H1 (cell line): ENCODE measurements at regions of chr10 and their contacts with region 1.

Region 1: GRCh38 chr10:72331601-72332422 is 22.9 kb downstream of the DNAJB12 start:
- DNase-seq: peak; percentile 76 to 88
- H3K4me3 ChIP-seq: peak overlapping the region in 1 of 4 experiments; percentile 39; a peak in 2 of 8 replicates
- H3K27ac ChIP-seq: no peak overlapping the region; the same call in 1 of the 2 replicates
- H3K4me1 ChIP-seq: peaks cover 0 to 36% (median 23%) of the 10 kb centered on the region in 4 experiments; a peak in 6 of 7 replicates
- H3K27me3 ChIP-seq: no peaks in the 10 kb centered on the region
- CTCF ChIP-seq: peak in 2 of 3 experiments; percentile 18 to 57; a peak in 3 of 4 replicates
- EP300 ChIP-seq: no peak
- POLR2A ChIP-seq: no peak; a peak in 1 of 3 replicates
- RAD21 ChIP-seq: peak in 1 of 2 experiments; percentile 25; a peak in 2 of 4 replicates

Region 2: GRCh38 chr10:72061491-72061890 is 270.3 kb before region 1 on chr10:
- CTCF ChIA-PET with region 1: interaction called, 10 read pairs
- POLR2A ChIA-PET with region 1: no interaction called
- DNase-seq: peak in 1 of 2 experiments; percentile 71
- H3K4me3 ChIP-seq: no peak overlapping the region
- H3K27ac ChIP-seq: no peak overlapping the region
- H3K4me1 ChIP-seq: peaks cover 0 to 9% (median 7%) of the 10 kb centered on the region in 4 experiments; a peak in 4 of 7 replicates
- H3K27me3 ChIP-seq: no peaks in the 10 kb centered on the region
- CTCF ChIP-seq: peak; percentile 70 to 76 (median 71)
- EP300 ChIP-seq: no peak
- POLR2A ChIP-seq: no peak
- RAD21 ChIP-seq: peak; percentile 64 to 74

Region 3: GRCh38 chr10:72126184-72126871 is 205.5 kb before region 1 on chr10:
- CTCF ChIA-PET with region 1: interaction called, 20 read pairs
- POLR2A ChIA-PET with region 1: no interaction called
- DNase-seq: no peak
- H3K4me3 ChIP-seq: no peak overlapping the region; a peak in 1 of 8 replicates
- H3K27ac ChIP-seq: no peak overlapping the region; the same call in 1 of the 2 replicates
- H3K4me1 ChIP-seq: peaks cover 0 to 5% (median 2%) of the 10 kb centered on the region in 4 experiments; a peak in 2 of 7 replicates
- H3K27me3 ChIP-seq: no peaks in the 10 kb centered on the region
- CTCF ChIP-seq: peak in 2 of 3 experiments; percentile 45 to 47; a peak in 2 of 4 replicates
- EP300 ChIP-seq: no peak
- POLR2A ChIP-seq: no peak
- RAD21 ChIP-seq: peak; percentile 59 to 66

Region 4: DNA sequence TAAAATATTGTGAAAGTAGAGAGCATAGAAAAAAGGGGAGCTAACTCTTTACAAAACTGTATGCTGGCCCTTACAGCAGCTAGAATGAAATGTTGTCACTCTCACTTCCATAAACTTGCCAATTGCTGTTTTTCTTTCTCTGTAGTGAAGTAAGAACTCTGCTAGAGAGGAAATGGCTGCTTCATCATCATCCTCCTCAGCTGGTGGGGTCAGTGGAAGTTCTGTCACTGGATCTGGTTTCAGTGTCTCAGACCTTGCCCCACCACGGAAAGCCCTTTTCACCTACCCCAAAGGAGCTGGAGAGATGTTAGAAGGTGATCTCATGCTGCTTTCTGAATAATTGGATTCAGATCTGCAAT is 108.1 kb before region 1 on chr10:
- CTCF ChIA-PET with region 1: interaction called, 11 read pairs
- POLR2A ChIA-PET with region 1: interaction called, 3 read pairs
- DNase-seq: no peak
- H3K4me3 ChIP-seq: no peak overlapping the region
- H3K27ac ChIP-seq: no peak overlapping the region
- H3K4me1 ChIP-seq: peaks cover 0 to 2% (median under 1%) of the 10 kb centered on the region in 4 experiments; a peak in 2 of 7 replicates
- H3K27me3 ChIP-seq: no peaks in the 10 kb centered on the region
- CTCF ChIP-seq: no peak
- EP300 ChIP-seq: no peak
- POLR2A ChIP-seq: no peak
- RAD21 ChIP-seq: no peak

Region 5: GRCh38 chr10:72260588-72261322 is 71.1 kb before region 1 on chr10:
- CTCF ChIA-PET with region 1: interaction called, 25 read pairs
- POLR2A ChIA-PET with region 1: interaction called, 16 read pairs
- DNase-seq: peak; percentile 93 to 96
- H3K4me3 ChIP-seq: peak overlapping the region; percentile 31 to 56 (median 46); a peak in 7 of 8 replicates
- H3K27ac ChIP-seq: peak overlapping the region; percentile 87
- H3K4me1 ChIP-seq: peaks cover 17 to 34% (median 24%) of the 10 kb centered on the region in 4 experiments
- H3K27me3 ChIP-seq: no peaks in the 10 kb centered on the region
- CTCF ChIP-seq: peak; percentile 19 to 47 (median 21); a peak in 3 of 4 replicates
- EP300 ChIP-seq: peak; percentile 14 to 68; a peak in 2 of 3 replicates
- POLR2A ChIP-seq: peak in 1 of 2 experiments; percentile 68; a peak in 1 of 3 replicates
- RAD21 ChIP-seq: peak; percentile 23 to 54; a peak in 2 of 4 replicates

Region 6: GRCh38 chr10:72297968-72298773 is 33.6 kb before region 1 on chr10:
- CTCF ChIA-PET with region 1: interaction called, 22 read pairs
- POLR2A ChIA-PET with region 1: interaction called, 4 read pairs
- DNase-seq: peak; percentile 77 to 96
- H3K4me3 ChIP-seq: peak overlapping the region; percentile 43 to 70 (median 56)
- H3K27ac ChIP-seq: peak overlapping the region; percentile 51
- H3K4me1 ChIP-seq: peaks cover 5 to 21% (median 12%) of the 10 kb centered on the region in 4 experiments
- H3K27me3 ChIP-seq: no peaks in the 10 kb centered on the region; a peak in 1 of 7 replicates
- CTCF ChIP-seq: peak in 1 of 3 experiments; percentile 5; a peak in 1 of 4 replicates
- EP300 ChIP-seq: no peak
- POLR2A ChIP-seq: peak in 1 of 2 experiments; percentile 13; a peak in 1 of 3 replicates
- RAD21 ChIP-seq: no peak

Region 7: GRCh38 chr10:72319416-72320254 is 12.2 kb before region 1 on chr10:
- CTCF ChIA-PET with region 1: interaction called, 7 read pairs
- POLR2A ChIA-PET with region 1: interaction called, 38 read pairs
- DNase-seq: peak in 1 of 2 experiments; percentile 83
- H3K4me3 ChIP-seq: peak overlapping the region; percentile 14 to 55 (median 22); a peak in 5 of 8 replicates
- H3K27ac ChIP-seq: no peak overlapping the region
- H3K4me1 ChIP-seq: peaks cover 17 to 39% (median 26%) of the 10 kb centered on the region in 4 experiments
- H3K27me3 ChIP-seq: no peaks in the 10 kb centered on the region
- CTCF ChIP-seq: no peak
- EP300 ChIP-seq: peak in 1 of 2 experiments; percentile 56; a peak in 1 of 3 replicates
- POLR2A ChIP-seq: no peak; a peak in 1 of 3 replicates
- RAD21 ChIP-seq: no peak; a peak in 1 of 4 replicates